CD4-positive, alpha-beta memory T cell (primary cell): ENCODE measurements at regions of chr1 and their contacts with region 1.

Region 1: DNA sequence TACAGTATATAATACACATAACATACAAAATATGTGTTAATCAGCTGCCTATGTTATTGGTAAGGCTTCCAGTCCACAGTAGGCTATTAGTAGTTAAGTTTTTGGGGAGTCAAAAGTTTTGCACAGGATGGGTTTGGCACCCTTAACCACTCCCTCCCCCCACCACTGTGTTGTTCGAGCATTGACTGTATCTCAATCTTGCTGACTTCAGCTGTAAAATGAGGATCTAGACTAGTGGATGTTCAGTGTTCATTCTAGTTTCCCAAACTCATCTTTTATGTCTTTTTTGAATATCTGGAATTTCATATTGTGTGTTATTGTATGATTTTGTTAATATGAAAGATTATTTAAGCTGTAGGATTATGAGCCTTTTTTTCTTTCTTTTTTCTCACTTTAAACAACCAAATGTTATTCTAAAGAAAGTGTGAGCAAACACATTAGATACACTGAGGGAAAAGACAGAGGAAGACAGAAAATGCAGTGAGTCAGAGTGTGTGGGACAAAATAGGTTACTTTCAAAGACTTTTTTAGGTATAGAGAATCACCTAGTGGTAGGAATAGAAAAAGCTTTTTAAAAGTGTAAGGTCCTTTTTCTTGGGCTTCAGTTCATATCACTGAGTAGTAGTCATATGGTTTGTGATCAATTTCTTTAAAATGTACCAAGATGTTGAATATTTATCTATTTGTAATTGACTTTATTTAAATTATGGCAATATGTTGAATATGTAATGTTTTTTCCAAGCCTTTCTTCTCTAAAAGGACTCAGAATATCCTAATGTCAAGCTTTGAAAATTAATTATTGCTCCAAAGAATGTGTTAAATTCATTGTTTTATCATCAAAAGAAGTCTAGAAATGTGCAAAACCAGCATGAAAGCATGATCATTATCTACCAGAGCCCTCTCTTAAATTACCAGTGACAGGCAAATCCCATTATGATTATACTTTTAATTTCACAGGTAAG is 17.9 kb upstream of the CENPF start:
- DNase-seq: no peak
- H3K4me3 ChIP-seq: no peak overlapping the region
- H3K4me3 Mint-ChIP-seq: no peak overlapping the region
- H3K27ac ChIP-seq: no peak overlapping the region
- H3K27ac Mint-ChIP-seq: no peak overlapping the region
- H3K4me1 ChIP-seq: no peaks in the 10 kb centered on the region
- H3K4me1 Mint-ChIP-seq: no peaks in the 10 kb centered on the region
- H3K27me3 ChIP-seq: no peaks in the 10 kb centered on the region
- H3K27me3 Mint-ChIP-seq: peaks cover 5 to 8% of the 10 kb centered on the region in 2 donors

Region 2: GRCh38 chr1:214389734-214390133 is 195.4 kb before region 1 on chr1:
- CTCF ChIA-PET with region 1: no interaction called
- POLR2A ChIA-PET with region 1: no interaction called
- intact Hi-C with region 1: loop called (anchors 2 kb)
- DNase-seq: no peak
- H3K4me3 ChIP-seq: no peak overlapping the region
- H3K4me3 Mint-ChIP-seq: no peak overlapping the region
- H3K27ac ChIP-seq: no peak overlapping the region
- H3K27ac Mint-ChIP-seq: no peak overlapping the region
- H3K4me1 ChIP-seq: no peaks in the 10 kb centered on the region
- H3K4me1 Mint-ChIP-seq: no peaks in the 10 kb centered on the region
- H3K27me3 ChIP-seq: no peaks in the 10 kb centered on the region
- H3K27me3 Mint-ChIP-seq: peaks cover 0 to 2% of the 10 kb centered on the region in 2 donors

Region 3: DNA sequence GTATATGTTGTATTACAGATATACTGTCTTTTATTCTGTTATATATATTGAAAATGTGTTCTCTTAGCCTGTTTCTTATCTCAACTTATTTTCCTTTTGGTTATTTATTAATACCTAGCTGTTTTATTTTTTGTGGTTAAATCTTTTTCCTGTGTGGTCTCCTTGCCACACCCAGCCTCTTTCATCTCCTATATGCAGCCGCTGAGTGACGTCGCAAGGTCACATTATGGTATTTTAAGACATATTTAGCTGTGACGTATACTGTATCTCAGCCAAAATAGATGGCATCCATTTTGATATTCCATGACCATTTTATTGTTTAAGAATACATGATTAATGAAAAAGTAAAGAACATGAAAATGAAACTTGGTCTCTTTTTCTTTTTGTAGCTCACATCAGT is 47.0 kb after region 1 on chr1:
- CTCF ChIA-PET with region 1: no interaction called
- POLR2A ChIA-PET with region 1: no interaction called
- intact Hi-C with region 1: no loop called
- DNase-seq: peak; percentile 65 to 80 (median 74)
- H3K4me3 ChIP-seq: peak overlapping the region in 1 of 2 donors; percentile 43
- H3K4me3 Mint-ChIP-seq: peak overlapping the region; percentile 33 to 75 (median 60)
- H3K27ac ChIP-seq: no peak overlapping the region
- H3K27ac Mint-ChIP-seq: peak overlapping the region; percentile 75 to 97 (median 94)
- H3K4me1 ChIP-seq: peaks cover 27% of the 10 kb centered on the region
- H3K4me1 Mint-ChIP-seq: peaks cover 11 to 34% (median 24%) of the 10 kb centered on the region in 4 donors
- H3K27me3 ChIP-seq: no peaks in the 10 kb centered on the region
- H3K27me3 Mint-ChIP-seq: no peaks in the 10 kb centered on the region